Right ventricle myocardium superior (tissue), 1 donor: ENCODE measurements at regions of chr7 and their contacts with region 1.

Region 1: GRCh38 chr7:121994625-121995410 is 121.9 kb downstream of the PTPRZ1 start:
- DNase-seq: peak; percentile 38
- ATAC-seq: peak; percentile 89

Region 2: DNA sequence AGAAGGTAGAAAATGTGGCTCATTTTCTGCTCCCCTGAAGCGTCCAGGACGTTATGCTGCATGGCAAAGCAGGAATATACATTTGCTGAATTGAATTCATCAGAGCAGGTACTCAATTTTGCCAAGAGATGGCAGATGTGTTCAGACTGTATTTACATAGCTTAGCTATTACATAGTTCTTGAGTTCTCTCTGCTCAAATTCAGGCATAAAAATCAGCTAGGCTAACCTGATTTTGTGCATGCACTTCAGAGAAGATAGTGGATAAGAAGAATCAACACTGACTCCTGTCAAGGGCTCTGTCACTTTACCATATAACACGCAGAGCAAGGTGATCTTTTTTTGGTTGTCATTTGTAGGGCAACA is 389.5 kb before region 1 on chr7:
- intact Hi-C with region 1: loop called (anchors 10 kb)
- DNase-seq: no peak
- ATAC-seq: peak; percentile 19